Lower leg skin (tissue), 4 donors: ENCODE measurements at regions of chr9 and their contacts with region 1.

Region 1: DNA sequence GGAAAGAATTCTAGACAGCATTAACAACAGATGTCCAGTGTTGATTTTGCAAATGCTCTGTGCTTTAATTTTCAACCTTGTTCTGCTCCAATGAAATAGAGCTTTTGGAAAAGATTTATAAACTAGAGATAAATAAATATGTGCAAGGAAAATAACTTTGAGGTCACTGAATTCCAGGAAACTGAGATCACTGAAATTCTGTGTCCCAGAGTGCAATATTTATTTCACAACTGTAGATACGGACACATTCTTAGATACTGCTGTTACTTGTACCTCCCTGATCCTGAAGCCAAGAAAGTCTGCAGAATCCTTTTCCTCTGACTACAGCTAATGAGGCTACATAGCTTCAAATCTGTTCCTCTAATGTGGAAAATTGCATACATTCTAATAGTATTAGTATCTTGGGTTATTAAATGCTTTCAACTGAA is 222.9 kb downstream of the DOCK8 start:
- DNase-seq: no peak
- H3K4me3 ChIP-seq: no peak overlapping the region
- CTCF ChIP-seq: no peak
- POLR2A ChIP-seq: no peak

Region 2: DNA sequence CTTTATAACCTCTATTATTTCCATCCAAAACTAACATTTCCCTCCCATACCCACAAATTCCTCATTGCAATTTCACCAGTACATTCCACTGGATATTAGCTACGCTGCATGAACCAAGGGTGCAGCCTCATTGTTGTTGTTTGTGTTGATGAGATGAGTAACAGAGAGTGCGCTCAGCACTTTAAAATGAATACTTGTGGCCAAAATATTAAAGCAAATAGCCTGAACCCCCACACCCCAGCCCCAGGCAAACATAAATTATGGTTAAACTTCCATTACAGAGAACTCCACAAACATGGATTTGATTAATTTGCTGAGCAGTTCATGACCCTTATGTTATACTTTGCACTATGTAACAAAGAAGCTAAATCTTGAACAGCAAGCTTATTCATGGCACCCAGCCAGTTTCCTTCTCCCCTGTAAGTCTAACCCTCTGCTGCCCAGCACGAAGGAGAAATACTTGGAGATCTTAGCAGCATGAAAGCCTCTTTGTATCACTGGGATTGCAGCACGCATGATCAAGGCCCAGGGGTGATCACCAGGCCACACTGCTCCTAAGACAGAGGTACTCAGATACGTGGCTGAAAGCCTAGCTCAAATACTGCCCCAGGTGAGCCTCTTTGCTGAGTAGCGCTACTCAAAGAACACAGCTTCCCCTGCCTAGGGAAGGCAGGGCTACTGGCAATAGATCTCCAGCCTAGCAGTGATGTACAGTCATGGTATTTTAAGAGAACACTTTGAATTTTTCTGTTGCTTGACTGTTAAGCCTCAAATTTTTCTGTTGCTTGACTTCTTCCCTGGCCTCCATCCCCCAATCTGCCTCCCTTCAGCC is 17.8 kb before region 1 on chr9:
- intact Hi-C with region 1: no loop called
- DNase-seq: no peak
- H3K4me3 ChIP-seq: no peak overlapping the region
- CTCF ChIP-seq: no peak
- POLR2A ChIP-seq: no peak

Region 3: GRCh38 chr9:841371-842209 is 404.0 kb after region 1 on chr9 and contains the start of gene DMRT1:
- intact Hi-C with region 1: no loop called
- DNase-seq: peak in 1 of 2 donors; percentile 70
- H3K4me3 ChIP-seq: no peak within 1 kb of the TSS
- CTCF ChIP-seq: no peak
- POLR2A ChIP-seq: no peak
- total RNA-seq, gene DMRT1: not detected

Region 4: GRCh38 chr9:1647776-1648175 is 1210.2 kb after region 1 on chr9:
- intact Hi-C with region 1: loop called (anchors 10 kb)
- DNase-seq: peak in 1 of 2 donors; percentile 49
- H3K4me3 ChIP-seq: no peak overlapping the region
- CTCF ChIP-seq: no peak
- POLR2A ChIP-seq: no peak